ENCODE measurements at regions of chr4 and their contacts with region 1.

Region 1: DNA sequence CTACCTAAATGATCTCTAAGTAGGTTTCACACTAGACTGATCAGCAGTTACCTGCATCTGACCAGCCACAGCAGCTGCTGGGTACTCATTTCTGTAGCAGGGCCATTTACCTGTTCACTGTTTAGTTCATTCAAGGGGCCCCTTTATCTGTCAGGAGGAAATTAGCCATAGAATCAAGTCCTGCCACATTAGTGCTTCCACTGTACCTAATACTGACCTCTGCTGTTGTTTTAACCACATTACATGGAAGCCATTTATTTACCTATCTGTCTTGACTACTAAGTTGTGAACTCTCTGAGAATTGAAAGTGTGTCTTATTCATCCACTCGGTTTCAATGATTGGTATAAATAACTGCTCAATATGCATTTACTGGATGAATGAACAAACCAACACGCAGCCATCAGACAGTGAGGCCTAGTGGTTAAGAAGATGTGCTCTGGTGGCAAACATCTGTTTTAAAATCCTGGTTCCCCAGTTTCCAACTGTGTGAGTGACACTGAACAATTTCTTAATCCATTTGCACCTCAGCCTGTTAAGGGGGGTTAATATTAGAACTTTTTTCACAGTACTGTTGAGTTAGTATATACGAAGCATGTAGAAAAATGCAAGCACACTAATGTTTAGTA is 30.0 kb upstream of the ANXA5 start:
- DNase-seq: no peak
- H3K4me3 ChIP-seq: no peak overlapping the region
- H3K27ac ChIP-seq: no peak overlapping the region
- H3K4me1 ChIP-seq: no peaks in the 10 kb centered on the region
- H3K27me3 ChIP-seq: no peaks in the 10 kb centered on the region
- CTCF ChIP-seq: peak; percentile 63

Region 2: DNA sequence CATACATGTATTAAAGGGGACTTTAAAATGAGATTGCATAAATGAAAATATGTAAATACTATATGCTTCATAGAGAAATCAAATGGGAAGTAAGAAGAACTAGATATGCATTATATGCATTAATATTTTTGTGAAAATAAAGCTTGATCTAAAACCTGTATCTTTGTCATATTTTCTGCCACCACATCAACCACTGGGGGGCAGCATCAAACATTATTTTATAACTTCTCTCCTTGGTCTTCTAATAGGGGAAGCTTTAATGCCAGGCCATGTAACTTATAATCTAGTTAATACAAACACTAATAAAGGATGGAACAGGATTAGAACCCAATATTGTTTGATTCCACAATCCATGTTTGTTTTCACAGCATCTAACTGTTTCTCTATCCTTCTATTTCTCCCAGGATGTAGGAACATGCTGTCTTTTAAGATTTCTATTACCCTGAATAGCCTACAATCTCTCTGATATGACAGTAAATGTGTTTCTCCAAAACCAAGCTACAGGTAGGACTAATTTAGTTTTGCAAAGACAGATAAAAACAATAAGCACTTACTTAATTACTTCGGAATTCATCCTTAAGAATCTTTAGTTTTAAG is 355.9 kb before region 1 on chr4:
- intact Hi-C with region 1: loop called (anchors 5 kb)
- DNase-seq: peak; percentile 32
- H3K4me3 ChIP-seq: no peak overlapping the region
- H3K27ac ChIP-seq: no peak overlapping the region
- H3K4me1 ChIP-seq: no peaks in the 10 kb centered on the region
- H3K27me3 ChIP-seq: no peaks in the 10 kb centered on the region
- CTCF ChIP-seq: peak; percentile 53

Measured in colonic mucosa (tissue), 4 donors.